Gastrocnemius medialis (tissue), 4 donors: ENCODE measurements at regions of chr19 and their contacts with region 1.

Region 1: GRCh38 chr19:55146078-55146704 is 2.8 kb downstream of the TNNT1 start:
- DNase-seq: peak in 1 of 2 donors; percentile 52
- ATAC-seq: no peak
- H3K4me3 ChIP-seq: peak overlapping the region; percentile 48 to 65 (median 56)
- H3K27ac ChIP-seq: peak overlapping the region; percentile 82 to 96 (median 93)
- H3K4me1 ChIP-seq: peaks cover 7 to 30% of the 10 kb centered on the region in 2 donors
- H3K27me3 ChIP-seq: peaks cover 14 to 30% (median 30%) of the 10 kb centered on the region in 3 donors
- CTCF ChIP-seq: peak; percentile 30 to 70 (median 56)
- POLR2A ChIP-seq: no peak

Region 2: GRCh38 chr19:55027472-55028337 is 118.5 kb before region 1 on chr19:
- in situ Hi-C with region 1: no loop called
- intact Hi-C with region 1: no loop called
- DNase-seq: no peak
- ATAC-seq: no peak
- H3K4me3 ChIP-seq: no peak overlapping the region
- H3K27ac ChIP-seq: no peak overlapping the region
- H3K4me1 ChIP-seq: no peaks in the 10 kb centered on the region
- H3K27me3 ChIP-seq: no peaks in the 10 kb centered on the region
- CTCF ChIP-seq: no peak
- POLR2A ChIP-seq: no peak

Region 3: GRCh38 chr19:55132453-55133129 is 13.6 kb before region 1 on chr19:
- in situ Hi-C with region 1: no loop called
- intact Hi-C with region 1: no loop called
- DNase-seq: no peak
- ATAC-seq: no peak
- H3K4me3 ChIP-seq: no peak overlapping the region
- H3K27ac ChIP-seq: no peak overlapping the region
- H3K4me1 ChIP-seq: no peaks in the 10 kb centered on the region
- H3K27me3 ChIP-seq: no peaks in the 10 kb centered on the region
- CTCF ChIP-seq: no peak
- POLR2A ChIP-seq: no peak

Region 4: GRCh38 chr19:55160128-55160985 is 14.2 kb after region 1 on chr19:
- in situ Hi-C with region 1: no loop called
- intact Hi-C with region 1: loop called (anchors 1 kb)
- DNase-seq: peak; percentile 57 to 89
- ATAC-seq: peak; percentile 77 to 79
- H3K4me3 ChIP-seq: no peak overlapping the region
- H3K27ac ChIP-seq: peak overlapping the region in 1 of 4 donors; percentile 73
- H3K4me1 ChIP-seq: peaks cover 0 to 18% of the 10 kb centered on the region in 2 donors
- H3K27me3 ChIP-seq: peaks cover 27 to 29% (median 29%) of the 10 kb centered on the region in 3 donors
- CTCF ChIP-seq: peak; percentile 70 to 91 (median 89)
- POLR2A ChIP-seq: no peak

Region 5: DNA sequence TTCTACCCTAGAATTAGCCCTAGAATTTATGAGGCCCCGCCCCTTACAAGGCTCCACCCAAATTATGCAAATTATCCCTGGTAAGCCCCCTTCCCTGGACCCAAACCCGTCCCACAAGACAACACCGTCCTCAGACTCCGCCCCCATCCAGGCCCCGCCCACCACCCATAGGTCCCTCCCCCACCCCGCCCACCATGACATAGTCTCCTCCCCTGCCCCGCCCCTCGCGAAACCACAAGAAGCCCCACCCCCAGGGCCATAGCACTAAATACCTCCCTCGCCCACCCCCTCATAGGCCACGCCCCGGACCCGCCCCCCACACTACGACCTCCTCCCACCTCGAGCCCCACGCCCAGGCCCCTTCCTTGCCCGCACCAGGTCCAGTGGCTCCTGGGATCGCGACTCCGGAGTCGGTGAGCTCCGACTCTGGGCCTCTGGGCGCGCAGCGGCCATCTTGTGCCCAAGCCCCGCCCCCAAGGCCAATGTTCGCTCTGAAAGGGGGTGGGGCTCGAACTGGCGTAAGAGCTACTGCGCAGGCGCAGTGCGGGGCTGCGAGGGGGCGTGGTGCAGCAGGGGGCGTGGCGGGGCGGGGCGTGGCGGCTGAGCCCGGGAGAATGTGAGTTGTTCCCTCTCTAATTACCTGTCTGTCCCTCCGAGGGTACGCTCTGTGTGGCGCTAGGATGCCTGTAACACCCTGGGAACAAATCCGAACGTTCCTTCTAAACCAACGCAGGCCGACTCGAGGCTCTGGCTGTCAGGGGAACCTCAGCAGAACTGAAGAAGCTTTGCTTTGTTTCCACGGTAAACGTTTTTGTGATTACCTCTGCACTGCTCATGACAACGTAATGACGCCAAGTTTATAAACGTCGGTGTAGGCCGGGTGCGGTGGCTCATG is 478.2 kb after region 1 on chr19 and contains the start of gene ZNF784:
- in situ Hi-C with region 1: loop called in 1 of 4 experiments (anchors 25 kb)
- intact Hi-C with region 1: no loop called
- DNase-seq: peak; percentile 89 to 91
- ATAC-seq: peak; percentile 76 to 83
- H3K4me3 ChIP-seq: peak within 1 kb of the TSS; percentile 71 to 77 (median 74)
- H3K27ac ChIP-seq: peak within 1 kb of the TSS; percentile 97 to 99 (median 98)
- H3K4me1 ChIP-seq: peaks cover 30 to 37% of the 10 kb centered on the region in 2 donors
- H3K27me3 ChIP-seq: no peaks in the 10 kb centered on the region
- CTCF ChIP-seq: no peak
- POLR2A ChIP-seq: peak; percentile 38 to 49
- total RNA-seq, gene ZNF784: 6.0 to 10.0 (median 8.2) TPM